Natural killer cell (primary cell): ENCODE measurements at regions of chr11 and their contacts with region 1.

Region 1: DNA sequence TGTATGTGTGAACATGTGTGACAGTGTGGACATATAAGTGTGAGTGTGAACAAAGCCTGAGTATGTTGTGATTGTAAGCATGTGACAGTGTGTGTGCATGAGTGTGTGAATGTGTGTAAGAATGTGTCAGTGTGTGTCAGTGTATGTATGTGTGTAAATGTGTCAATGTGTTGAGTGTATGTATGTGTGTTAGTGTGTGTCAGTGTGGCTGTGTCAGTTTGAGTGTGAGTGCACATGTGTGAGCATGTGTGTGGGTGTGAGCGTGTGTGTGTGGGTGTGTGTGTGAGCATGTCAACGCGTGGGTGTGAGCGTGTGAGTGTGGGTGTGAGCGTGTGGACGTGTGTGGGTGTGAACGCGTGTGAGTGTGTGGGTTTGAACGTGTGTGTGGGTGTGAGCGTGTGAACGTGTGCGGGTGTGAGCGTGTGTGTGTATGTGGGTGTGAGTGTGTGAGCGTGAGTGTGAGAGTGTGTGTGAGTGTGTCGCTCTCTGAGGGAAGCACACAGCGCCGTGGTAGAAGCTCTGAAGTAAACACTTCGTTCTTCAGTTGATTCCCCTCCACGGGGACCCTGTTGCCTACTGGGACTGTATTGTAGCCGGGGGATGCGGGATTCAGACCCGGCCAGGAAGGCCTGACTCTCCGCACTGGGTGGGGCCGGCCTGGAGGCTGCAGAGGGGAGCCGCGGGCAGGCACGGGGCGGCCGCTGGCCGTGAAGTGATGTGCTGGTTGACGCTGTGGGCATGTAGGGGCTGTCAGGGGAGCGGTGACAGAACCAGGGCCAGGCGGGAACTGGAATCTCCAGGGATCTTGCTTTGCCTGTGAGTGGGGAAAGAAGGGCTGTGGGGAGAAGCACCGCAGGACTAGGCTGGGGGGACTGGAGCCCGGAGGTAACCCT is 21.1 kb downstream of the RPS6KA4 start:
- DNase-seq: no peak
- ATAC-seq: no peak
- H3K4me3 ChIP-seq: no peak overlapping the region
- H3K4me3 Mint-ChIP-seq: no peak overlapping the region
- H3K27ac ChIP-seq: no peak overlapping the region
- H3K27ac Mint-ChIP-seq: no peak overlapping the region
- H3K4me1 ChIP-seq: peaks cover 3% of the 10 kb centered on the region
- H3K4me1 Mint-ChIP-seq: no peaks in the 10 kb centered on the region
- H3K27me3 ChIP-seq: no peaks in the 10 kb centered on the region
- H3K27me3 Mint-ChIP-seq: peaks cover 0 to 2% of the 10 kb centered on the region in 2 donors
- CTCF ChIP-seq: no peak

Region 2: DNA sequence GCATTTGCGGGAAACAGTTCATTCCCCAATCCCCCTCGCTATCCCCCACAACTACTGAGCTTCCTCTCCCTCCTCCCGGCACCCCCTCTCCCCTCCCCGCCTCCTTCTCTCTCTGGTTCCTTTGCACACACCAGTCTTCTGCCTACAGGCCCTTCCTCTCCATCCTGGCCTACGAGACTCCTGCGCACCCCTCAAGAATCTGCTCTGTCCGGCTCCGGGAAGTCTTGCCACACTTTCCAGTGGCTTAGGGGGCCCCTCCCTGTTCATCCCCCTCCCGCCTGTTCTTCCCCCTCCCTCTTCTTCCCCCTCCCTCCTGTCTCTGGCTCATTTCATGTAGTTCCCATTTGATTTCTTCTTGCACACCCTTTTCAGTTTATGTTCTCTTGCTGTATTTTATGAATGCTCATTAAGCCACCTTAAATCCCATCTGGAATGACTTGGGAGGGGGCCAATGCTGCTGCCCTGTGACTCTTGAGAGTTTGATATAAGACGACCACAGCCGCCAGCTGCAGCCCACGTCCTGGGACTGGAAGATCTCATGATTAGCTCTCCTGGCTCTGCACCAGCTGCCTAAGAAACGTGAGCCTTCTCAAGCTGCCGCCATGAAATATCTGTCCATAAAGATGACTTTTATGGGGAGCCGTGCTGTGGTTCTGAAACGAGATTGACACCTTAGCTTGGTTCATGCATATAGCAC is 29.8 kb after region 1 on chr11:
- intact Hi-C with region 1: loop called (anchors 1 kb)
- DNase-seq: no peak
- ATAC-seq: no peak
- H3K4me3 ChIP-seq: no peak overlapping the region
- H3K4me3 Mint-ChIP-seq: no peak overlapping the region
- H3K27ac ChIP-seq: no peak overlapping the region
- H3K27ac Mint-ChIP-seq: no peak overlapping the region
- H3K4me1 ChIP-seq: no peaks in the 10 kb centered on the region
- H3K4me1 Mint-ChIP-seq: peaks cover 0 to 2% of the 10 kb centered on the region in 2 donors
- H3K27me3 ChIP-seq: no peaks in the 10 kb centered on the region
- H3K27me3 Mint-ChIP-seq: peaks cover 0 to 2% of the 10 kb centered on the region in 2 donors
- CTCF ChIP-seq: no peak